ENCODE measurements at regions of chr1 and their contacts with region 1.

Region 1: GRCh38 chr1:157496121-157496526 is 56.2 kb downstream of the FCRL5 start:
- DNase-seq: peak; percentile 55
- H3K4me3 Mint-ChIP-seq: no peak overlapping the region
- H3K27ac Mint-ChIP-seq: no peak overlapping the region
- H3K4me1 Mint-ChIP-seq: no peaks in the 10 kb centered on the region
- H3K27me3 Mint-ChIP-seq: peaks cover 9% of the 10 kb centered on the region

Region 2: GRCh38 chr1:157193702-157194391 is 302.3 kb before region 1 on chr1:
- CTCF ChIA-PET with region 1: interaction called, 15 read pairs
- intact Hi-C with region 1: no loop called
- DNase-seq: peak; percentile 80
- H3K4me3 Mint-ChIP-seq: no peak overlapping the region
- H3K27ac Mint-ChIP-seq: no peak overlapping the region
- H3K4me1 Mint-ChIP-seq: peaks cover 3% of the 10 kb centered on the region
- H3K27me3 Mint-ChIP-seq: peaks cover 26% of the 10 kb centered on the region

Region 3: DNA sequence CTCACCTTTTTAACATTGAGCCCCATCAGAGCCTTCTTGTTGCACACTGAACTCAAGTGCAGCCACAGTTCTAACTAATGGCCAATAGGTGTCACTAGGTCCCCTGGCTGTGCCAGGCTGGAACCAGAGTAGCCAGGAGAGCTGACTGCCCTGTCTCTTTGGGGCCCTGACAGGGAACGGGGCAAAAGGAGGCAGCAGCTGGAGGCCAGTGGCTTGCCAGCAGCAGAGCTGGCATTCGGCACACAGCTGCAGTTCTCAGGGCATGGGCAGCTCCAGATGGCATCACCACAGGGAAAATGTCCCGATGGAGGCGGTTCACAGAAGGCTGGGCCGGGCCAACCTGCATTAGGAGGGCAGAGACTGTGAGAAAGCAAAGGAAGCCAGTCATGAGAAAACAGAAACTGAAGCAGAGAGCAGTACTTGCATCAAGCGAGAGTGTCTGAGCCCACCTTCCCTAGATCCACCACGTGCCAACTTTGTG is 132.4 kb before region 1 on chr1:
- CTCF ChIA-PET with region 1: interaction called, 12 read pairs
- intact Hi-C with region 1: no loop called
- DNase-seq: peak; percentile 20
- H3K4me3 Mint-ChIP-seq: no peak overlapping the region
- H3K27ac Mint-ChIP-seq: no peak overlapping the region
- H3K4me1 Mint-ChIP-seq: no peaks in the 10 kb centered on the region
- H3K27me3 Mint-ChIP-seq: no peaks in the 10 kb centered on the region

Region 4: GRCh38 chr1:157369808-157370521 is 126.2 kb before region 1 on chr1:
- CTCF ChIA-PET with region 1: interaction called, 19 read pairs
- intact Hi-C with region 1: no loop called
- DNase-seq: peak; percentile 58
- H3K4me3 Mint-ChIP-seq: no peak overlapping the region
- H3K27ac Mint-ChIP-seq: no peak overlapping the region
- H3K4me1 Mint-ChIP-seq: no peaks in the 10 kb centered on the region
- H3K27me3 Mint-ChIP-seq: peaks cover 8% of the 10 kb centered on the region